Activated B cell treated with CpG ODN at 0.5 μM for 24 hours (primary cell): ENCODE measurements at regions of chr14 and their contacts with region 1.

Region 1: DNA sequence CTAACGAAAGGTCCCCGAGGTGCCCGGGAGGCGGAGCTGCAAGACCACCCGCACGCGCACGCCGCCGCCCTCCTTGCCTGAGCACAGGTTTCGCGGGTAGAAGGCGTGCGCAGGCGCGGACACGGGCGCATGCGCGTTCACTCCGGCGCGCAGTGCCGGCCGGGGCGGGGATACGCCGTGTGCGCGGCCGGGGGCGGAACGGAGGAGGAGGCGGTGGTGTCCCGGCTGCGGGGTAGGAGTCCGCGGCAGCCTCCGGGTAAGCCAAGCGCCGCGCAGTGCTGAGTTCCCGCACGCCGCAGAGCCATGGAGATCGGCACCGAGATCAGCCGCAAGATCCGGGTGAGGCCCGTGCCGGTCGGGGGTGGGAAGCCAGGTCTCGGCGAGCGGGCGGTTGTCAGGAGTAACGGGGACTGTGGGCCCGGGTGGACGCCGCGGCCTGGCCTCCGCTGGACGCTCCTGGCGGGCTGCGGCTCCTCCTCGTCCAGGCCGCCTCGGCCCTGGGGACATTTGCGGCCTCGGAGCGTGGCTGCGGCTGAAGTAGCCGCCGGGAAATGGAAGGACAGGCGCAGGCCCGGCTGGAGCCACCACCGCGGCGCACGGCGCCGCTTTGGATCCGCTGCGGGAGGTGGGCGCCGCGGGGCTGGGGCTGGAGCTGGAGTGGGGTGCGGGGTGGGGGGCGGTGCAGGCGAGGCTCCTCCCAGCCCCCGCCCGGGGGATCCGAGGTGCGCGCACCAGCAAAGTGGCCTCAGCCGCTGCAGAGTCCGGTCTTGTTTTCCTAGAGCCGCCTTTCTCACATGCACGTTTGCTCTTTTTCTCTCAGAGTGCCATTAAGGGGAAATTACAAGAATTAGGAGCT is at the start of gene ZC3H14:
- DNase-seq: peak; percentile 87
- ATAC-seq: peak; percentile 97
- H3K4me3 Mint-ChIP-seq: peak within 1 kb of the TSS; percentile 96
- H3K27ac Mint-ChIP-seq: peak within 1 kb of the TSS; percentile 86
- H3K4me1 Mint-ChIP-seq: peaks cover 18% of the 10 kb centered on the region
- H3K27me3 Mint-ChIP-seq: peaks cover 6% of the 10 kb centered on the region
- CTCF ChIP-seq: no peak
- total RNA-seq, gene ZC3H14: 38.7 and 45.0 TPM in 2 replicates

Region 2: DNA sequence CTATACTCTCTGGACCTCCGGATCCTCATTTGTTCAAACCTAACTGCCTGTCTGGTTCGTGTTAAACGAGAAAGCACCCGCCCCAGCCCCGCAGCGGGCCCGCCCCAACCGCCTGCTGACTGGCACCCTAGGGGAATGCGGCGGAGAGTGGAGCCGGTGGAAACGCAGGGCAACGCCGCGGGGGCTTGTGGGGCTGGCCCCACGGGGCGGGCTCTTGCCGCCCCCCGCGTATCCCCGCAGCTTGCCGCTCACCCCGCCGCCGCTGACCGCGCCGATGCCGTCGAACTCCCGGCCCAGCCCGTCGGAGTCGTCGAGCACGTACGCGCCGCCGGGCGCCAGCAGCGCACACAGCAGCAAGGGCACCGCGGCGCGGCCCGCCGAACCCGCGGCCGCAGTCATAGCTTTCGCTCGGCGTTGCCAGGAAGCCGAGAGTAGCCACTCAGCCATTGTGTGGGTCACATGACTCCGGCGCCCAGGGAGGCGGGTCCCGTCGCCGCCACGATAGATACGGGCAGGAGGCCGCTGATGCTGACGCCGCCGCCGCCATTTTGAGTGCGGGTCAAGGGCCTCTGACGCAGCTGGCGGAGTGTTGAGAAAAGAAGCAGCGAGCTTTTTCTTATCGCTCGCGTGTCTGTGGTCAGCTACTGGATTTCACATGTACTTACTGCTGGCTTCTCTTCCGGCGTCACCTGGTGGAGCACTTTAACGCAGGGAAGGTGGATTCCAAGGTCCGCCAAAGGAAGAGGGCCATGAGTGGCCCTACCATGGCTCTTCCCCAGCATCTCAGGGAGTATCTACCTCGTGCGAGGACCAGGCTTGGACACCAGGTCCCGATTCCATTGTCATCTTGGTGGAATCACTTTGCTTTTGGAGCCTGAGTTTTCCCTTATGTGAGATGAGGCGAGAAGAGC is 570.1 kb before region 1 on chr14 and contains the start of gene GALC:
- CTCF ChIA-PET with region 1: no interaction called
- POLR2A ChIA-PET with region 1: no interaction called
- intact Hi-C with region 1: loop called (anchors 5 kb)
- DNase-seq: peak; percentile 89
- ATAC-seq: peak; percentile 80
- H3K4me3 Mint-ChIP-seq: peak within 1 kb of the TSS; percentile 89
- H3K27ac Mint-ChIP-seq: peak within 1 kb of the TSS; percentile 99
- H3K4me1 Mint-ChIP-seq: peaks cover 41% of the 10 kb centered on the region
- H3K27me3 Mint-ChIP-seq: no peaks in the 10 kb centered on the region
- CTCF ChIP-seq: no peak
- total RNA-seq, gene GALC: 8.3 and 9.7 TPM in 2 replicates

Region 3: GRCh38 chr14:88209273-88209672 is 353.8 kb before region 1 on chr14:
- CTCF ChIA-PET with region 1: no interaction called
- POLR2A ChIA-PET with region 1: no interaction called
- intact Hi-C with region 1: loop called (anchors 5 kb)
- DNase-seq: peak; percentile 43
- ATAC-seq: peak; percentile 86
- H3K4me3 Mint-ChIP-seq: peak overlapping the region; percentile 79
- H3K27ac Mint-ChIP-seq: peak overlapping the region; percentile 92
- H3K4me1 Mint-ChIP-seq: peaks cover 42% of the 10 kb centered on the region
- H3K27me3 Mint-ChIP-seq: peaks cover 5% of the 10 kb centered on the region
- CTCF ChIP-seq: no peak

Region 4: DNA sequence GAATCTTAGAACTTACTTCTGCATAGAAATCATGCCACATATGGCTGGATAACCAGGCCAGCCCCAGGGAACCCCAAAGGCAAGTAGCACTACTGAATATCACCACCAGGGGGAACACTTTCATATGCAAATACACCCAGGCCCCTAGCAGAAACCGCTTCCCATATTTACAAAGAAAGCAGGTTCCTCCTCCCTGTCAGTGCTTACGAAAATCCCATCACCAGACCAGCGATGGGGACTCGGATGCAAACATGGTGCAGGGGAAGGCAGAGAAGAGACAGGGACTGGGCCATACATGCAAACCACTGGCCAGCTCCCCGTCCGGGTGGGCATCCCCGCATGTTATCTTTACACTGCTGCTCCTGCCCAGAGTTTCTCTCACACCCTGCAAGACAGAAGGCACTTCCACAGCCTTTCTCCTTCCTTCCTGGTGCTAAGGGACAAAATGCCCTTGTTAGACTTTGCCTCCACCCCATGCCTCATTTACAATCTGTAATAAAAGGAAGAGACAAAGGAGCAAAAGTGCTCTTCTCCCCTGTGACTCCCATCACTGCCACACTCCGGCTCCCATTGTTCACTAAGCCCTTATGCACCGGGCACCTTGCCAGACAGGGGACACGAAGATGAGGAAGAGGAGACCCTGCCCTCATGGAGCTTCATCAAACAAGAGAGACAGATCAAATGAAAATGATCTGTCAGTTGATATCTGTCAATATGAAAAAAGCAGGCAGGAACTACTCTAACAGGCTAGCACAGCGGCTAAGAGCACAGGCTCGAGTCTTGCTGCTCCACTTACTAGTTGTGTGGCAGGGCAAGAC is 70.6 kb before region 1 on chr14:
- CTCF ChIA-PET with region 1: no interaction called
- POLR2A ChIA-PET with region 1: no interaction called
- intact Hi-C with region 1: loop called (anchors 5 kb)
- DNase-seq: peak; percentile 16
- ATAC-seq: peak; percentile 72
- H3K4me3 Mint-ChIP-seq: no peak overlapping the region
- H3K27ac Mint-ChIP-seq: no peak overlapping the region
- H3K4me1 Mint-ChIP-seq: peaks cover 2% of the 10 kb centered on the region
- H3K27me3 Mint-ChIP-seq: no peaks in the 10 kb centered on the region
- CTCF ChIP-seq: no peak

Region 5: DNA sequence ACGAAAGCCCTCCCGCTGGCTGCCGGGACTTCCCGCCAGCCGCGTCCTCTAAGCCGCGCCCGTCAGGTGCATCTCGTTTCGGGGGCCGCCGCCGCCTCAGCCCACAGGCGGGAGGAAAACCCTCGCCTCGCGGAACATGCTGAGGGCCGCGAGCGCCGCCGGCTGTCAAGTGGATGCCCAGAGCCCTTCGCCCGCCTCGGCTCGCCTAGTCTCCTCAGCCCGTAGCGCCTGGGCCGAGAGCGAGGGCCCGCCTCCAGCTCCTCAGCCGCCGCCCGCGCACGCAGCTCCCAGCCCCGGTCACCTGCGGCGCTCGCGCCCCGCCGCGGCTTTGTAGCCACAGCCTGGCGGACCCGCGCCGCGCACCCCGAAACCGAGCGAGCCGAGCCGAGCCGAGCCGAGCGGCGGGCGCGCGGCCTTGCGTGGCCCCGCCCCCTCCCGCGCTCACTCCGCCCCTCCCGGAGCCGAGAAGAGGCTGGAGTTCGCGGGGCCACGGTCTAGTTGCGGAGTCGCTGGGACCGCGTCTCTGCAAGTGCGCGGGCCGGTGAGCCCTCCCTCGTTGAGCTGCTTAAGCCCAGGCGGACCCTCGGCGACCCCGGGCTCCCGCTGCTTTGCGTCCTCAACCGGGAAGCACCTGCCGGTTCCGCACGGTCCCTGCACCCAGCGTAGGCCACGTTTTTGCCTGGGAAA is 229.7 kb after region 1 on chr14 and contains the start of gene EML5:
- CTCF ChIA-PET with region 1: no interaction called
- POLR2A ChIA-PET with region 1: no interaction called
- intact Hi-C with region 1: loop called (anchors 10 kb)
- DNase-seq: peak; percentile 81
- ATAC-seq: peak; percentile 86
- H3K4me3 Mint-ChIP-seq: peak within 1 kb of the TSS; percentile 89
- H3K27ac Mint-ChIP-seq: peak within 1 kb of the TSS; percentile 71
- H3K4me1 Mint-ChIP-seq: peaks cover 24% of the 10 kb centered on the region
- H3K27me3 Mint-ChIP-seq: no peaks in the 10 kb centered on the region
- CTCF ChIP-seq: no peak
- total RNA-seq, gene EML5: 3.8 and 5.0 TPM in 2 replicates